CD8-positive, alpha-beta memory T cell (primary cell): ENCODE measurements at regions of chr5 and their contacts with region 1.

Region 1: DNA sequence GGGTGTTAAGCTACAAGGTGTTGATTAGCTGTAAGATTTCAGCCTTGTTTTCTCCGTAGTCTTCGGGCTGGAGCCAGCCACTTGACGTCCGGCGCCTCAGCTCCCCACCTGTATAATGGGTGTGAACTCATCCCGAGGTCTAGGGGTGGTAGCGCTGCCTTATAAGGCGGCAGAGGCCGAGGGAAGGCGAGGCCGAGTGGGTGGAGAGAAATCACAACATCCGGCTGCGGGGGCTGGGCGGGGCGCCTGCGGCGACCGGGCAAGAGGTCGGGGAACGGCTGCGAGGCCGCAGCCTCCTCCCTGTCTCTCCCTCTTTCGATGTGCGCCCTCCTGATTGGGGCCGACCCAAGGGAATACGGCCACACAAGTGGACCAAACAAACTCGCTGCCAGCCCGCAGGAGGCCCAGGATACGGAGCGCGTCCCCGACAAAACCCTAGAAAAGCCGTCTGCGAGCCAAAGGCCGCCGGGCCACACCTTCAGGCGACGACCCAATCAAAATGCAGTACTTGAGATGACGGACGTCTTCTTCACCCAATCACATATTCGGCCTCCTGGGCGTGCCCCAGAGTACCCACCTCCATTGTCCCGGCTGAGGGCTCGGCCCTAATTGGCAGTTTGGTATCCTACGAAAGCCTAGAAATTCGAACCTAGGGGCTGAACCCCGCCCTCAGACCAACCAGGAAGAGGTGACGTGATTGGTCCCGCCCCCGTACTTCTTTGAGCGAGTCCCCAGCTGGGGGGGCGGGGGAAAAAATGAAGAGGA is 493 bp upstream of the GRK6 start:
- DNase-seq: peak; percentile 99 to 100 (median 100)
- H3K4me3 ChIP-seq: peak overlapping the region; percentile 93
- H3K4me3 Mint-ChIP-seq: peak overlapping the region; percentile 89 to 96 (median 95)
- H3K27ac ChIP-seq: peak overlapping the region; percentile 90
- H3K27ac Mint-ChIP-seq: peak overlapping the region; percentile 92 to 99 (median 98)
- H3K4me1 ChIP-seq: peaks cover 55% of the 10 kb centered on the region
- H3K4me1 Mint-ChIP-seq: peaks cover 45 to 60% (median 51%) of the 10 kb centered on the region in 3 donors
- H3K27me3 ChIP-seq: no peaks in the 10 kb centered on the region
- H3K27me3 Mint-ChIP-seq: peaks cover 0 to 2% of the 10 kb centered on the region in 2 donors

Region 2: GRCh38 chr5:177116631-177117373 is 309.2 kb before region 1 on chr5:
- CTCF ChIA-PET with region 1: no interaction called
- POLR2A ChIA-PET with region 1: no interaction called
- DNase-seq: peak; percentile 68 to 88 (median 79)
- H3K4me3 ChIP-seq: peak overlapping the region; percentile 35
- H3K4me3 Mint-ChIP-seq: peak overlapping the region; percentile 20 to 89 (median 76)
- H3K27ac ChIP-seq: peak overlapping the region; percentile 55
- H3K27ac Mint-ChIP-seq: peak overlapping the region; percentile 16 to 91 (median 80)
- H3K4me1 ChIP-seq: peaks cover 13% of the 10 kb centered on the region
- H3K4me1 Mint-ChIP-seq: peaks cover 16 to 21% (median 21%) of the 10 kb centered on the region in 3 donors
- H3K27me3 ChIP-seq: no peaks in the 10 kb centered on the region
- H3K27me3 Mint-ChIP-seq: no peaks in the 10 kb centered on the region

Region 3: GRCh38 chr5:177412603-177413233 is 13.3 kb before region 1 on chr5:
- CTCF ChIA-PET with region 1: interaction called, 7 read pairs
- POLR2A ChIA-PET with region 1: interaction called, 10 read pairs
- DNase-seq: peak in 1 of 5 donors; percentile 56
- H3K4me3 ChIP-seq: peak overlapping the region; percentile 41
- H3K4me3 Mint-ChIP-seq: peak overlapping the region; percentile 61 to 83 (median 74)
- H3K27ac ChIP-seq: peak overlapping the region; percentile 12
- H3K27ac Mint-ChIP-seq: peak overlapping the region; percentile 77 to 93 (median 90)
- H3K4me1 ChIP-seq: peaks cover 43% of the 10 kb centered on the region
- H3K4me1 Mint-ChIP-seq: peaks cover 25 to 58% (median 49%) of the 10 kb centered on the region in 3 donors
- H3K27me3 ChIP-seq: no peaks in the 10 kb centered on the region
- H3K27me3 Mint-ChIP-seq: no peaks in the 10 kb centered on the region

Region 4: DNA sequence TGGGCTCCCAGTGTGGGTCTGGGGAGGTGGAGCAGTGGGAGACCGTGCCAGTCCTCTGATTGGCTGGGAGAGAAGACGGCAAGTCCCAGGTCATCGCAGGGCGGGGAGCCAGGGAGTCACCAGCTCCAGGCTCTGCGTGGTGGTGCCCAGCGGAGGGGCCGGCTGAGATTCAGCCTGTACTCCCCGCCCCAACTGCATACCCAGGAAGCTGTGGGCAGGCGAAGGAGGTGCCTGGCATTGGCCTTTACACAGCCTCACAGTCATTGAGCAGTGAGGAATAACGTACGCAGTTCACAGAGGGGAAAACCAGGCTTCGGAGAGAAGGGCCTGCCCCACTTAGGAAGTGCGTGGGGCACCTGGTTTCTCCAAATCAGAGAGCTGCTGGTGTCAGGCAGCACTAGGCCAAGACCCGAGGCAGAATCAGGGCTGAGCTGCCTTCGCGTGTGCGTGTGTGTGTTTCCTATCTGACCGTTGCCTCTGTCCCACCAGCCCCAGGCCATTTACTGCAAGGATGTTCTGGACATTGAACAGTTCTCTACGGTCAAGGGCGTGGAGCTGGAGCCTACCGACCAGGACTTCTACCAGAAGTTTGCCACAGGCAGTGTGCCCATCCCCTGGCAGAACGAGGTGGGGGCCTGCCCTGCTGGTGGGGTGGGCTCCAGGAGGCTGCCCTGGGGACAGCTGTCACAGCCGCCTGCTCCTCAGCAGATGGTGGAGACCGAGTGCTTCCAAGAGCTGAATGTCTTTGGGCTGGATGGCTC is 14.4 kb after region 1 on chr5:
- CTCF ChIA-PET with region 1: interaction called, 326 read pairs
- POLR2A ChIA-PET with region 1: interaction called, 154 read pairs
- DNase-seq: peak in 4 of 5 donors; percentile 38 to 65 (median 59)
- H3K4me3 ChIP-seq: no peak overlapping the region
- H3K4me3 Mint-ChIP-seq: peak overlapping the region in 5 of 7 donors; percentile 9 to 67 (median 44)
- H3K27ac ChIP-seq: peak overlapping the region; percentile 43
- H3K27ac Mint-ChIP-seq: peak overlapping the region; percentile 13 to 96 (median 93)
- H3K4me1 ChIP-seq: peaks cover 49% of the 10 kb centered on the region
- H3K4me1 Mint-ChIP-seq: peaks cover 47 to 74% (median 53%) of the 10 kb centered on the region in 3 donors
- H3K27me3 ChIP-seq: no peaks in the 10 kb centered on the region
- H3K27me3 Mint-ChIP-seq: no peaks in the 10 kb centered on the region

Region 5: GRCh38 chr5:177446200-177447065 is 20.4 kb after region 1 on chr5 and contains the start of gene PRR7:
- CTCF ChIA-PET with region 1: interaction called, 326 read pairs
- POLR2A ChIA-PET with region 1: interaction called, 154 read pairs
- DNase-seq: peak; percentile 58 to 85 (median 81)
- H3K4me3 ChIP-seq: peak within 1 kb of the TSS; percentile 56
- H3K4me3 Mint-ChIP-seq: peak within 1 kb of the TSS; percentile 74 to 92 (median 85)
- H3K27ac ChIP-seq: peak within 1 kb of the TSS; percentile 66
- H3K27ac Mint-ChIP-seq: peak within 1 kb of the TSS; percentile 83 to 100 (median 98)
- H3K4me1 ChIP-seq: peaks cover 32% of the 10 kb centered on the region
- H3K4me1 Mint-ChIP-seq: peaks cover 39 to 55% (median 40%) of the 10 kb centered on the region in 3 donors
- H3K27me3 ChIP-seq: no peaks in the 10 kb centered on the region
- H3K27me3 Mint-ChIP-seq: no peaks in the 10 kb centered on the region
- total RNA-seq, gene PRR7: 14.7 to 15.3 TPM